ENCODE measurements at regions of chr11 and their contacts with region 1.

Region 1: DNA sequence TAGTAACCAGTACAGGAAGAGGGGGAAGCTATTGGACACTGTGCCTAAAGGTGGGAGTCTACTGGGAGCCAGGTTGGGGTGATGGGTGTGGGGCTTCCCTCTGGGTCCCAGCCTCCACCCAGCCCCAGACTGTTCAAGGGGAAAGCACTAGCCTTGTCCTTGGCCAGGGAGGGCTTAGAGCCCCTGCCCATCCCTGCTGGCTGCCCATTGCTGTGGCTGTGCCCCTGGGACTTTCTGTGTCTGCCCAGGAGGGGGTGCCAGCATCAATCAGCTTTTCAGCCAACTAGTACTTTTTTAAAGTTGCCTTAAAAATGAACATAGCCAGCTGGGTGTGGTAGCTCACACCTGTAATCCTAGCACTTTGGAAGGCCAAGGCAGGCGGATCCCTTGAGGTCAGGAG is 19.9 kb downstream of the INCENP start:
- DNase-seq: peak; percentile 30
- H3K4me3 ChIP-seq: no peak overlapping the region
- H3K27ac ChIP-seq: no peak overlapping the region
- H3K4me1 ChIP-seq: no peaks in the 10 kb centered on the region
- H3K27me3 ChIP-seq: no peaks in the 10 kb centered on the region
- CTCF ChIP-seq: peak; percentile 5 to 43
- POLR2A ChIP-seq: no peak

Region 2: GRCh38 chr11:61994981-61995380 is 148.7 kb before region 1 on chr11:
- CTCF ChIA-PET with region 1: no interaction called
- POLR2A ChIA-PET with region 1: no interaction called
- dilution Hi-C with region 1: no loop called
- intact Hi-C with region 1: no loop called
- DNase-seq: no peak
- H3K4me3 ChIP-seq: no peak overlapping the region
- H3K27ac ChIP-seq: no peak overlapping the region
- H3K4me1 ChIP-seq: no peaks in the 10 kb centered on the region
- H3K27me3 ChIP-seq: peaks cover 0 to under 1% of the 10 kb centered on the region in 2 experiments
- CTCF ChIP-seq: no peak
- POLR2A ChIP-seq: no peak

Region 3: GRCh38 chr11:62132188-62132587 is 11.5 kb before region 1 on chr11:
- CTCF ChIA-PET with region 1: interaction called, 11 read pairs
- POLR2A ChIA-PET with region 1: no interaction called
- dilution Hi-C with region 1: no loop called
- intact Hi-C with region 1: no loop called
- DNase-seq: no peak
- H3K4me3 ChIP-seq: no peak overlapping the region
- H3K27ac ChIP-seq: no peak overlapping the region
- H3K4me1 ChIP-seq: no peaks in the 10 kb centered on the region
- H3K27me3 ChIP-seq: no peaks in the 10 kb centered on the region
- CTCF ChIP-seq: no peak
- POLR2A ChIP-seq: no peak

Region 4: DNA sequence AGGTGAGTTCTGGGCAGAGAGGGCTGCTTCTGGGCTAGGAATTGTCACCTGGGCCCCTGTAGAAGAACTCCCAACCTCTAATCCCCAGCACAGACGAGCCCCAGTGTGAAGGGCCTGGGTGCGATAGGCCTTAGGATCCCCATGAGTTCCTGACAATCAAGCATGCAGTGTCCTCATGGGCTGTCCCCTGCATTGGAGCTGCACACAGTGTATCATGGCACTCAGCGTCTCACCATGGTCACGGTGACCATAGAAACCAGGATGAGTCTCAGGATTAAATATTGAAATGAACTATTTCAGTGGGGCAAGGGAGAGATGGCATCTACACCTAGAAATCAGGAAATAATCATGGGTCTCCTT is 65.0 kb after region 1 on chr11:
- CTCF ChIA-PET with region 1: interaction called, 39 read pairs
- POLR2A ChIA-PET with region 1: no interaction called
- dilution Hi-C with region 1: no loop called
- intact Hi-C with region 1: loop called (anchors 2 kb)
- DNase-seq: no peak
- H3K4me3 ChIP-seq: no peak overlapping the region
- H3K27ac ChIP-seq: no peak overlapping the region
- H3K4me1 ChIP-seq: no peaks in the 10 kb centered on the region
- H3K27me3 ChIP-seq: peaks cover 0 to 4% of the 10 kb centered on the region in 2 experiments
- CTCF ChIP-seq: no peak
- POLR2A ChIP-seq: no peak

Measured in endothelial cell of umbilical vein (primary cell).